ENCODE measurements at regions of chr1 and their contacts with region 1.

Region 1: DNA sequence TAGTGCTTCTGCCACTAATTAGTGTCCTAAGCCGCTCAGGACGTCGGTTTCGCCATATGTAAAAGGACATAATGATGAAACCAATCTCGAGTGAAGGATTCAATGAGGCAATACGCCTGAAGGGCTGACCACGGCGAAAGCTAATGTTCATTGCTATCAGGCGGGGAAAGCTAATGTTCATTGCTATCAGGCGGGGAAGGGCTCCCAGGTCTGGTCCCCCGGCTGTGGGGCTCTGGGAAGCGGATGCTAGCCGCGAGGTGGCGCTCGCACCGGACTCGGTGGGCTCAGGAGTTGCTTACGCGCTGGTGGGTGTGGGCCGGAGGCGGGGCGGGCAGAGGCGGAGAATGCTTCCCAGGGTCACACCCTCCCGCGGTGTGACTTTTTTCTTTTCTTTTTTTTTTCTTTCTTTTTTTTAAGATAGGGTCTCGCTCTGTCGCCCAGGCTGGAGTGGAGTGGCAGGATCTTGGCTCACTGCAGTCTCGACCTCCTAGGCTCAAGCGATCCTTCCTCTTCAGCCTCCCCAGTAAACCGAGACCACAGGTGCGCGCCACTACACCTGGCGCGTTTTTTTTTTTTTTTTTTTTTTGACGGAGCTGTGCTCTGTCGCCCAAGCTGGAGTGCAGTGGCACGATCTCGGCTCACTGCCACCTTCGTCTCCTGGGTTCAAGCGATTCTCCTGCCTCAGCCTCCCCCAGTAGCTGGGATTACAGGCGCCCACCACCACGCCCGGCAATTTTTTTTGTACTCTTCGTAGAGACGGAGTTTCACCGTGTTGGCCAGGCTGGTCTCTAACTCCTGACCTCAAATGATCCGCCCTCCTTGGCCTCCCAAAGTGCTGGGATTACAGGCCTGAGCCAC is 1.1 kb upstream of the PEAR1 start:
- DNase-seq: peak; percentile 70
- ATAC-seq: peak; percentile 90
- H3K4me3 Mint-ChIP-seq: peak overlapping the region; percentile 61
- H3K27ac Mint-ChIP-seq: no peak overlapping the region
- H3K4me1 Mint-ChIP-seq: peaks cover 9% of the 10 kb centered on the region
- H3K27me3 Mint-ChIP-seq: peaks cover 64% of the 10 kb centered on the region
- CTCF ChIP-seq: peak; percentile 32

Region 2: GRCh38 chr1:156625436-156626078 is 266.9 kb before region 1 on chr1:
- CTCF ChIA-PET with region 1: interaction called, 6 read pairs
- POLR2A ChIA-PET with region 1: no interaction called
- intact Hi-C with region 1: loop called (anchors 2 kb)
- DNase-seq: peak; percentile 66
- ATAC-seq: peak; percentile 71
- H3K4me3 Mint-ChIP-seq: peak overlapping the region; percentile 74
- H3K27ac Mint-ChIP-seq: peak overlapping the region; percentile 3
- H3K4me1 Mint-ChIP-seq: peaks cover 12% of the 10 kb centered on the region
- H3K27me3 Mint-ChIP-seq: peaks cover 32% of the 10 kb centered on the region
- CTCF ChIP-seq: peak; percentile 27

Region 3: DNA sequence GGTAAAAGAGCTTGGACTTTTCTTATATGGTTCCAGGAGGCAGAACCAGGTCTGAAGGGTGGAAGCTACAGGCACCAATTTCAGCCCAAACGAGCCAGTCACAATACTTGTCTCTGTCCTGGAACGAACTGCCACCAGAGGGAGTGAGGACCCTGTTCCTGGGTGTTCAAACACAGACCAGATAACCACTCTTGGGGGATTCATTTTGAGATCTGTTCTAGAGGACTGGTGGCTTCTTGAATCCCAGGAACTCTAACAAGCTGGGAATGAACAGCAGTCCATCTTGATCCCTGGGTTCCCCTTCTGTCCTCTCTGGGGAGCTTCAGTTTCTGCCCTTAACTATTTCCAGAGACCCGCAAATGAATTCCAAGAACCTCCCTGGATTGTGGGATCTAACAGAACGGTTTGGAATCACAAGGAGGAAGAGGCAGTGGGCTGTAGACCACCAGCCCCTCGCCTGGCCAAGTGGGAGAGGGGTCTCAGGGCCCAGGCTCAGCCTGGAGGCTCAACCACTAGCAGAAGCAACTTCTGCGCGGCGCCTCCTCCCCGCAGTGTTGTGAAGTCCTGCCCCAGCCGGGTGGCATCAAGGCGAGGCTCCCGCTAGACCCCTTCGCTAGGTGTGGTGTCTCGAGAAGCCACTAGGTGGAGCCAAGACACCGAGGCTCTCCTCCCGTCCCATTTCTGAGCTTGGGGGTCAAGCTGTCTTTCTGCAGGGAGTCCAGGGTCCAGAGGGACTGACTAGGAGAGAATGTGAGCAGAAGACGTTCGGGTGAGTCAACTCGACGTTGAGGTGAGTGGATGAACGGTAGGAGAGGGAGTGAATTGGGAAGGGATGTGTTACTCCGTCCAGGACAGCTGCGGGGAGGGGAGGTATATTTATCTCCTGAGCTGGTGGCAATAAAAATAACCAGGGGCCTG is 203.1 kb before region 1 on chr1:
- CTCF ChIA-PET with region 1: interaction called, 53 read pairs
- POLR2A ChIA-PET with region 1: no interaction called
- intact Hi-C with region 1: loop called (anchors 1 kb)
- DNase-seq: peak; percentile 55
- ATAC-seq: peak; percentile 98
- H3K4me3 Mint-ChIP-seq: no peak overlapping the region
- H3K27ac Mint-ChIP-seq: no peak overlapping the region
- H3K4me1 Mint-ChIP-seq: peaks cover 22% of the 10 kb centered on the region
- H3K27me3 Mint-ChIP-seq: peaks cover 51% of the 10 kb centered on the region
- CTCF ChIP-seq: peak; percentile 86

Region 4: GRCh38 chr1:156797212-156797871 is 95.1 kb before region 1 on chr1:
- CTCF ChIA-PET with region 1: interaction called, 10 read pairs
- POLR2A ChIA-PET with region 1: no interaction called
- intact Hi-C with region 1: loop called (anchors 1 kb)
- DNase-seq: no peak
- ATAC-seq: peak; percentile 73
- H3K4me3 Mint-ChIP-seq: no peak overlapping the region
- H3K27ac Mint-ChIP-seq: no peak overlapping the region
- H3K4me1 Mint-ChIP-seq: peaks cover 7% of the 10 kb centered on the region
- H3K27me3 Mint-ChIP-seq: no peaks in the 10 kb centered on the region
- CTCF ChIP-seq: peak; percentile 57

Region 5: DNA sequence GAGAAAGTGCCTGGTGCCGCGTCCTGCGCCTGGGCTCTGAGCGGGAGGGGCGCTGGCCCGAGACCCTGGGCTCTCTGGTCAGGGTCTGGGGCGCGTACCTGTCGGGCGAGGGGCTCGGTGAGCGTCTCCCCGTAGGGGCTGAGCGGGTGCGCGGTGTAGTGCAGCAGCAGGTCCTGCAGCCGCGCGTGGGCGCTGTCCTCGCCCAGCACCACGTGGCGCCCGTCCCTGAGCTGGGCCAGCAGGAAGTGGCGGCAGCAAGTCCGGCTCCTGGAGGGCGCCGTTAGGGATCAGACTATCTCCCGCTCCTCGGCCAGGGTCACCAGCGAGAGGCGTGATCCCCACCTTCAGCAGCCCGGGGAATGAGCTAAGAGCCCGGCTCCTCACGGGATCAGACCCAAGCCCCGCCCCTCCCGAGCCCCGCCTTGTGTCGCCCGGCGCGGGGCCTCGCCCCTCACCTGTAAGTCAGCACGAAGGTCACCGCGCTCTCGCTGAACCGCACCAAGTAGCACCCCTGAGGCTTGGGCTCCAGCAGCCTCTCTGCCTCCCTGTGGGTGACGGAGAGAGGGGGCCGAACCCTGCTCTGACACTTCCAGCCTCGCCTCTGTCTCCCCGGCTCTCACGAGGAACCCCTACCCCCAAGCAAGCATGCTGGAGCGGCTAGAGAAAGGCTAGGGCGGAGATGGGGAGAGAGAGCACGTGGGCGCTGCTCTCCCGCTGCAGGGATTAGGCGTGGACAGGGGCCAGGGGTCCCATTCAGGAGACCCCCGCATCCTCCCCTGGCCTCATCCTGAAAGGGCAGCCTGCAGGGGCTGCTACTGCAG is 78.5 kb before region 1 on chr1:
- CTCF ChIA-PET with region 1: no interaction called
- POLR2A ChIA-PET with region 1: no interaction called
- intact Hi-C with region 1: loop called (anchors 5 kb)
- DNase-seq: peak; percentile 57
- ATAC-seq: peak; percentile 74
- H3K4me3 Mint-ChIP-seq: peak overlapping the region; percentile 85
- H3K27ac Mint-ChIP-seq: no peak overlapping the region
- H3K4me1 Mint-ChIP-seq: peaks cover 32% of the 10 kb centered on the region
- H3K27me3 Mint-ChIP-seq: no peaks in the 10 kb centered on the region
- CTCF ChIP-seq: no peak

Region 6: DNA sequence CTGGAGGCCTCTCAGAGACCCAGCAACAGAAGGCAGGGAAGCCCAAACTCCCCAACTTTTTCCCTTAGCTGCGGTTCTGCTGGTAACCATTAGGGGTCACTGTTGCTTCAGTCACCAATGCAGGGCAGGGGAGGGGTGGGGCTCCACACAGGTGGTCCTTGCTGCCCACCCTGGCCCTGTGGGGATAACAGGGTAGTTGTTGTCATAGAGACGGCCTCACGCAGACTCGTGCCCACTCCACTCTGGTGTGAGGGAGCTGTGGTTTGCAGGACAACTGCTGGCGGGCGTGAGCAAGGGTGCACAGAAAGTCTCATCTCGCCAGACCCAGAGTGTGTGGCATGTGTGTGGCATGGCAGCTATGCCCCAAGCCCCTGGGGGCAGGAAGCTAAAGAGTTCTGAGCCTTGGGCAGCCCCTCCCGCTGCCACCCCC is 53.4 kb before region 1 on chr1:
- CTCF ChIA-PET with region 1: interaction called, 16 read pairs
- POLR2A ChIA-PET with region 1: no interaction called
- intact Hi-C with region 1: no loop called
- DNase-seq: no peak
- ATAC-seq: no peak
- H3K4me3 Mint-ChIP-seq: no peak overlapping the region
- H3K27ac Mint-ChIP-seq: no peak overlapping the region
- H3K4me1 Mint-ChIP-seq: no peaks in the 10 kb centered on the region
- H3K27me3 Mint-ChIP-seq: peaks cover 53% of the 10 kb centered on the region
- CTCF ChIP-seq: no peak

Region 7: DNA sequence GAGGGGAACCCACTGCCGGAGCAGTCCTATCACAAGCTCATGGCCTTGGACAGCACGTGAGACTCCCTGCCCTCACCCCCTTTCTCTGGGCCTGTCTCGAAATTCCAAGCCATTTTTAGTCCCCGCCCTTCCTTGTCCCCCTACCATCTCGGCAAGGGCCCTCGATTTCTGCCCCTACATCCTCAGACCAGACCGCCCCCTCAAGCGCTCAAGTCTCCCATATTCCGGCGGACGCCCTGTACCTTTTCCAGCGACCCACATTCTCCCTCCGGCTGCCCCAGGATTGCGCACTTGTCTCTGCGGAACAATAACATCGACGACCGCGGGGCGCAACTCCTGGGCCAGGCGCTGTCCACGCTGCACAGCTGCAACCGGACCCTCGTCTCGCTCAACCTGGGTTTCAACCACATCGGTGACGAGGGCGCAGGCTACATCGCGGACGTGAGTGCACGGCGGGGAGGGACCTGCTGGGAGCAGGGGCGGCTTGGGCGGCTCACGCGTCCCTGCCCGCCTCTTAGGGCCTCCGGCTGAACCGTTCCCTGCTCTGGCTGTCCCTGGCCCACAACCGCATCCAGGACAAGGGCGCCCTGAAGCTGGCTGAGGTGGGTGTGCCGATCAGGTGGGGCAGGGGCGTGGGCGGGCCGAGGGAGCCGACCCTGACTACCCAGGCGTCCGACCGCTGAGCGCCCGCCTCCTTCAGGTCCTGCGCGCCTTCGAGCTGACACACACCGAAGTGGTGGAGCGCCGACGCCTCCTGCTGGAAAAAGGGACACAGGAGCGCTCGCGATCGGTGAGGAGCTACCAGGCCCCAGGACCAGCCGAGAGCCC is 35.0 kb after region 1 on chr1:
- CTCF ChIA-PET with region 1: no interaction called
- POLR2A ChIA-PET with region 1: no interaction called
- intact Hi-C with region 1: loop called (anchors 5 kb)
- DNase-seq: peak; percentile 26
- ATAC-seq: peak; percentile 60
- H3K4me3 Mint-ChIP-seq: no peak overlapping the region
- H3K27ac Mint-ChIP-seq: no peak overlapping the region
- H3K4me1 Mint-ChIP-seq: peaks cover 9% of the 10 kb centered on the region
- H3K27me3 Mint-ChIP-seq: peaks cover 67% of the 10 kb centered on the region
- CTCF ChIP-seq: no peak

Region 8: GRCh38 chr1:157163273-157164127 is 271.1 kb after region 1 on chr1:
- CTCF ChIA-PET with region 1: no interaction called
- POLR2A ChIA-PET with region 1: no interaction called
- intact Hi-C with region 1: no loop called
- DNase-seq: peak; percentile 76
- ATAC-seq: peak; percentile 62
- H3K4me3 Mint-ChIP-seq: no peak overlapping the region
- H3K27ac Mint-ChIP-seq: no peak overlapping the region
- H3K4me1 Mint-ChIP-seq: no peaks in the 10 kb centered on the region
- H3K27me3 Mint-ChIP-seq: peaks cover 18% of the 10 kb centered on the region
- CTCF ChIP-seq: peak; percentile 89